ENCODE measurements at regions of chr1 and their contacts with region 1.

Region 1: DNA sequence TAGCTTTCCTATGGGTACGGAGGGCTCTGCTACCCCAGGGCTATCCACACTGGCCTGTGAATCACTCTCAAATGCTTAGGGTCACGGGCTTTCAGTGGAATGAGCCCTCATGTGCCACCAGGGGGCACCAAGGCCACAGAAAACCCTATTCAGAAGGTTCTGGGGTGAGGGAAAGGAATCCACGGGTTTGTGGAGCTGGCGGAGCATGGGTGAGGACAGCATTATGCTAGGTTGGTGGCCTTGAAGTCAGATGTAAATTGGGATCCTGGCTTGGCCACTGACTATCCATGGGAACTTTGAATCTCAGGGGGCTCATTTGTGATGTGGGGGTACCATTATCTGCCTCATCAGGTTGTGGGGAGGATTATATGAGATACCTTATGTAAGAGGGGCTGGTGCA is 5.1 kb upstream of the LAMTOR5 start:
- DNase-seq: peak; percentile 64
- CTCF ChIP-seq: peak; percentile 64

Region 2: DNA sequence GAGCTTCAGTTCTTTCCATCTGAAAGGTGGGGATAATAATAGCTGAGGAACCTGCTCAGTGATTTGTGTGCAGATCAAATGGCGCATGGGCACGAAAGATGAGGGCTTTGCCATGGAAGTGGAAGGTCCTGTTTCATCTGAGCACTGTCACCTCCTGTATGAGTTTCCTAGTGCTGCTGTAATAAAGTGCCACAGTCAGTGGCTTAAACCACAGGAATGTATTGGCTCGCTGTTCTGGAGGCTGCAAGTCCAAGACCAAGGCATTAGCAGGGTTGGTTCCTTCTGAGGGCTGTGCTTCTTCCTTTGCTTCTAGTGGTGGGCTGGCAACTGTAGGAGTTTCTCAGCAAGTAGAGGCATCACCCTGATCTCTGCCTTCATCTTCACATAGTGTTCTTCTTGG is 124.5 kb before region 1 on chr1:
- CTCF ChIA-PET with region 1: no interaction called
- POLR2A ChIA-PET with region 1: no interaction called
- DNase-seq: no peak
- CTCF ChIP-seq: no peak

Region 3: GRCh38 chr1:110384581-110385321 is 27.8 kb before region 1 on chr1:
- CTCF ChIA-PET with region 1: interaction called, 20 read pairs
- POLR2A ChIA-PET with region 1: no interaction called
- DNase-seq: peak; percentile 41
- CTCF ChIP-seq: no peak

Region 4: GRCh38 chr1:110426854-110427253 is 14.3 kb after region 1 on chr1:
- CTCF ChIA-PET with region 1: interaction called, 34 read pairs
- POLR2A ChIA-PET with region 1: no interaction called
- DNase-seq: no peak
- CTCF ChIP-seq: no peak

Region 5: DNA sequence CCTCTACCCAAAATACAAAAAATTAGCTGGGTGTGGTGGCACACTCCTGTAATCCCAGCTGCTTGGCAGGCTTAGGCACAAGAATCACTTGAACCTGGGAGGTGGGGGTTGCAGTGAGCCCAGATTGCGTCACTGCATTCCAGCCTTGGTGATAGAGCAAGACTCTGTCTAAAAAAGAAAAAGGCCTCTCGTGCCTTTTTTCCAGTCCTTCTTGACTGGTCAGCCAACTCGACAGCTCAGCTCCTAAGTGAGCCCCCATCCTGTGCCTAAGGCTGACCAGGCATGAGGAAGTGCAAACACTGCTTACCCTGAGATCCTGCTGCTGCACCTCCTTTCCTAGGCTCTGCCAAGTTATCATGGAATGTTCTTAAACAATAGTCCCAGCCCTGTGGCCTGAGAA is 28.3 kb after region 1 on chr1:
- CTCF ChIA-PET with region 1: interaction called, 16 read pairs
- POLR2A ChIA-PET with region 1: no interaction called
- DNase-seq: no peak
- CTCF ChIP-seq: no peak

Region 6: GRCh38 chr1:110554871-110555801 is 142.6 kb after region 1 on chr1:
- CTCF ChIA-PET with region 1: no interaction called
- POLR2A ChIA-PET with region 1: no interaction called
- DNase-seq: peak; percentile 78
- CTCF ChIP-seq: peak; percentile 63

Measured in GM10248 (cell line).